ENCODE measurements at regions of chr7 and their contacts with region 1.

Region 1: GRCh38 chr7:117375380-117375779 is 51.9 kb downstream of the ASZ1 start:
- DNase-seq: peak; percentile 37
- ATAC-seq: peak; percentile 75
- H3K4me3 ChIP-seq: no peak overlapping the region
- H3K27ac ChIP-seq: no peak overlapping the region
- H3K4me1 ChIP-seq: 0 out of 2 replicates have a peak, but pooled peaks cover 2% of the 10 kb centered on the region
- H3K27me3 ChIP-seq: no peaks in the 10 kb centered on the region
- CTCF ChIP-seq: peak; percentile 42
- POLR2A ChIP-seq: no peak
- RAD21 ChIP-seq: peak; percentile 14; the same call in 1 of the 2 replicates

Region 2: GRCh38 chr7:117149692-117150091 is 225.7 kb before region 1 on chr7:
- CTCF ChIA-PET with region 1: no interaction called
- POLR2A ChIA-PET with region 1: interaction called, 13 read pairs
- dilution Hi-C with region 1: no loop called
- in situ Hi-C with region 1: no loop called
- intact Hi-C with region 1: no loop called
- DNase-seq: no peak
- ATAC-seq: no peak
- H3K4me3 ChIP-seq: no peak overlapping the region
- H3K27ac ChIP-seq: no peak overlapping the region
- H3K4me1 ChIP-seq: no peaks in the 10 kb centered on the region
- H3K27me3 ChIP-seq: no peaks in the 10 kb centered on the region
- CTCF ChIP-seq: no peak
- POLR2A ChIP-seq: no peak
- RAD21 ChIP-seq: no peak

Region 3: GRCh38 chr7:117808341-117808757 is 433.0 kb after region 1 on chr7:
- CTCF ChIA-PET with region 1: no interaction called
- POLR2A ChIA-PET with region 1: no interaction called
- dilution Hi-C with region 1: no loop called
- in situ Hi-C with region 1: no loop called
- intact Hi-C with region 1: no loop called
- DNase-seq: no peak
- ATAC-seq: no peak
- H3K4me3 ChIP-seq: no peak overlapping the region
- H3K27ac ChIP-seq: no peak overlapping the region
- H3K4me1 ChIP-seq: peaks cover 9% of the 10 kb centered on the region
- H3K27me3 ChIP-seq: no peaks in the 10 kb centered on the region
- CTCF ChIP-seq: no peak
- POLR2A ChIP-seq: no peak
- RAD21 ChIP-seq: no peak

Measured in IMR-90 (cell line).